GM10248 (cell line): ENCODE measurements at regions of chrX and their contacts with region 1.

Region 1: DNA sequence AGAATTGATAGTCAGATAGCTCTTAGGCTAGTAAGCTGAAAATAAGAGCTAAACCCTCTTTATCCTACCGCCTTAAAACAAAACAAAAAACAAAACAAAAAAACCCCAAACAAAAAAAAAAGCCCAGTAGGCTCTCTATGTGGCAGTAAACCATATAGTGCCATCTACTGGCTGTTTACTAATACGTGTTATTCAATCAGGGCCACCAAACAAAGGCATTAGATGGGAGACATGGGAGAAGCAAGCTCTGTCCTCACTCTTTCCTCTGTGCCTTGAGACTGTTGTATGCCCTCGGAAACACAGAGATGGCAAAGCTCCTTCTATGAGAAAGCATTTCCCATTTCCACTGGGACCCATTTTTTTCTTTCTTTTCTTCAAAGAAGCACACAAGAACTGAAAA is 148.8 kb upstream of the MID1 start:
- DNase-seq: peak; percentile 28
- CTCF ChIP-seq: peak; percentile 35

Region 2: DNA sequence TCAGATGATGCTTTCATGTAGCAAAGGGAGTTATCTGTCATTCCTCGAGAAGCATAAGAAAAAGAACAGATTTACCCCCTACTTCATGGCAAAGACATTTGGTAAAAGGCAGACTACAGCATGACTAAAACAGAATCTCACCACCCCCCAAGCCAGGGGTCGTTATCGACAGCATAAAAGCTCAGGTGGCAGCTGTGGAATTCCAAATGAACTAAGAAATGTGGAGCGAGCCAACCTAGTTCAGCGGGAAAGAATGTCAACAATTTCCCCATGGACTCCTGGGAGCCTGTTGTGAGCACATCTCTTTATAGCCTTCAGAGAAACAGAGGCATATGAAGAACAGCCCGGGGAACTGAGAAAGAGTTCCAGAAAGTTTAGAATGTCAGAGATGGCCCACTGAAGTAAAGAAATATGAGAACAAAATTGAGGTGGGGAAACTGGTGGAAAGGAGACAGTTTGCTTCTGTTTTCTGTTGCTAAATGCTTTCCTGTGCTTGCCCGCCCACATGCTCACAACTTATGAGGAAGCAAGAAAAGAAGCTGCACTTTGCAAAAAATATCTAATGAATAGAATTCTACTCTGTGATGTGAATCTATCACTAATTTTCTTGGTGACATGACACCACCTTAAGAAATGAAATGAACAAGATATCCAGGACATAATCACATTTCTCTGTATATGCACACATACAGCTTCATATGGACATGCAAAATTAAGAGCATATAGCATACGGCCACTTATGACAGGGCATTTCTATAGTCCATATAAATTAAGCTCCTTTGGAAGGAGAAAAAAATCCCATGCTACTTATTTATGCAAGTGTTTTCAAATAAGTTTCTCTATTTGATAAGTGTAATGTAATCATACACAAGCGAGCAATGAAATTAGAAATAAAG is 13.5 kb before region 1 on chrX:
- CTCF ChIA-PET with region 1: interaction called, 11 read pairs
- POLR2A ChIA-PET with region 1: no interaction called
- DNase-seq: no peak
- CTCF ChIP-seq: no peak

Region 3: DNA sequence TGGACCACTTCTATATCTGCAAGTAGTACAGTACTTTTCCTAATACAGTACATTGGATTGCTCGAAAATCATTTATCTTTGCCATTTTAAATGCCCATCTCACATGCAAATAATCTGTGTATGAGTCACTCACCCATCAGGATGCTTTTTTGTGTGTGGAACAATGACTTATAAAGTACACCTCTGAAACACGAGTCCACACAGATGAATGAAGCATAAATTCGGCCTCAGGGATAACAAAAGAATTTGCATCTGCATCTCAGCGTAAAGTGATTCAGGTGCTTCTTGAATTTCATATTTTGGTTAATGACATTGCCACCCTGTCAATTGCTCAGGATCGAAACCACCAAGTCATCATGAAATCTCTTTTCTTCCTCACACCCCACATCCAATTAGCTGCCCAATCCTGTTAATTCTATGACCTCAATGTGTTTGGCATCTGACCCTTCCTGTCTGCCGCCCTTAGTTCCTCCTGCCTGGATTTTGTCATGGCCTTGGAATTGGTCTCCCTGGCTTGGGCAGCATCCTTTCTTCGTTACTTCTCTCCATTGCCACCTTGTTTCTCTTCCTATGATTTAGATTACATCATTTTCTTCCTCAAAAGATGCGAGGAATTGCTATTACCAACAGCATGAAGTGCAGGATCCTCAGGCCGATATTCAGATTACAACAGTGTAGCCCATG is 12.8 kb after region 1 on chrX:
- CTCF ChIA-PET with region 1: interaction called, 12 read pairs
- POLR2A ChIA-PET with region 1: no interaction called
- DNase-seq: no peak
- CTCF ChIP-seq: no peak